Activated CD8-positive, alpha-beta T cell treated with anti-CD3 and anti-CD28 coated beads, Interleukin-2, amount 10 ng/mL, durations not matched to agents 7 days and 5 days (primary cell): ENCODE measurements at regions of chr6 and their contacts with region 1.

Region 1: DNA sequence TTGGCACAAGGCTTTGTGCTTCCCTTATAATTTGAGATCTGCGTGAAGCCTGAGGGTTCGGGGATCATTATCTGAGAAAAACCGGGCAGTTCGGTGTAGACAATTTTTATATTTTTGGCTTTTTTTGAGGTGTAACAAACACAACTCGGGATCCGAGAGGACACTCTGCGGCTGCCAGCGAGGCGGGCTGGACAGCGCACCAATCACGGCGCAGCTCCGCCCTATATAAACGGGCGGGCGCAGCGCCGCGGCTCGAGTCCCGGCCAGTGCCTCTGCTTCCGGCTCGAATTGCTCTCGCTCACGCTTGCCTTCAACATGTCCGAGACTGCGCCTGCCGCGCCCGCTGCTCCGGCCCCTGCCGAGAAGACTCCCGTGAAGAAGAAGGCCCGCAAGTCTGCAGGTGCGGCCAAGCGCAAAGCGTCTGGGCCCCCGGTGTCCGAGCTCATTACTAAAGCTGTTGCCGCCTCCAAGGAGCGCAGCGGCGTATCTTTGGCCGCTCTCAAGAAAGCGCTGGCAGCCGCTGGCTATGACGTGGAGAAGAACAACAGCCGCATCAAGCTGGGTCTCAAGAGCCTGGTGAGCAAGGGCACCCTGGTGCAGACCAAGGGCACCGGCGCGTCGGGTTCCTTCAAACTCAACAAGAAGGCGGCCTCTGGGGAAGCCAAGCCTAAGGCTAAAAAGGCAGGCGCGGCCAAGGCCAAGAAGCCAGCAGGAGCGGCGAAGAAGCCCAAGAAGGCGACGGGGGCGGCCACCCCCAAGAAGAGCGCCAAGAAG is 69.0 kb downstream of the HFE start:
- DNase-seq: peak; percentile 91
- ATAC-seq: peak; percentile 55
- H3K4me3 Mint-ChIP-seq: peak overlapping the region; percentile 94
- H3K27ac Mint-ChIP-seq: peak overlapping the region; percentile 99
- H3K4me1 Mint-ChIP-seq: peaks cover 37% of the 10 kb centered on the region
- H3K27me3 Mint-ChIP-seq: peaks cover 8% of the 10 kb centered on the region

Region 2: DNA sequence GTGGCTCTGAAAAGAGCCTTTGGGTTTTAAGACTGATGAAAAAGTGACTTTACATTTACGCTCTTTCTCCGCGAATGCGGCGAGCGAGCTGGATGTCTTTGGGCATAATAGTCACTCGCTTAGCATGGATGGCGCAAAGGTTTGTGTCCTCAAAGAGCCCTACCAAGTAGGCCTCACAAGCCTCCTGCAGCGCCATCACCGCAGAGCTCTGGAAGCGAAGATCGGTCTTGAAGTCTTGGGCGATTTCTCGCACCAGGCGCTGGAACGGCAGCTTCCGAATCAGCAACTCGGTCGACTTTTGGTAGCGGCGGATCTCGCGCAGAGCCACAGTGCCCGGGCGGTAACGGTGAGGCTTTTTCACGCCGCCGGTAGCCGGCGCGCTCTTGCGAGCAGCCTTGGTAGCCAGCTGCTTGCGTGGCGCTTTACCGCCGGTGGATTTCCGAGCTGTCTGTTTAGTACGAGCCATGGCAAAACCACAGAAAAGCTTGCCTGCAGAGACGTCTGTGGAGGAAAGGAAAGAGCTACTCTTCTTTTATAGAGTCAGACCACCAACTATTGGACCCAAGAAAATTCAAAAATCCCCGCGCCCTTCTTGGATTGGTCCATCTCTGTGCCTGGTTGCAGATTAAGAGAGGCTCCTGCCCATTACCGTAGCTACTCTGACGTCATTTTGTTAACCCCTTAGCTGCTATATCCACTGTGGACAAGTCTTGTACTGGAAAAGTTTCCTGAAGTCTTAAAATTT is 124.5 kb before region 1 on chr6:
- CTCF ChIA-PET with region 1: interaction called, 6 read pairs
- POLR2A ChIA-PET with region 1: interaction called, 312 read pairs
- DNase-seq: peak; percentile 97
- ATAC-seq: peak; percentile 66
- H3K4me3 Mint-ChIP-seq: peak overlapping the region; percentile 93
- H3K27ac Mint-ChIP-seq: peak overlapping the region; percentile 99
- H3K4me1 Mint-ChIP-seq: peaks cover 68% of the 10 kb centered on the region
- H3K27me3 Mint-ChIP-seq: peaks cover 3% of the 10 kb centered on the region

Region 3: GRCh38 chr6:26103770-26104456 is 52.4 kb before region 1 on chr6:
- CTCF ChIA-PET with region 1: interaction called, 3 read pairs
- POLR2A ChIA-PET with region 1: interaction called, 213 read pairs
- DNase-seq: peak; percentile 93
- ATAC-seq: peak; percentile 89
- H3K4me3 Mint-ChIP-seq: peak overlapping the region; percentile 85
- H3K27ac Mint-ChIP-seq: peak overlapping the region; percentile 98
- H3K4me1 Mint-ChIP-seq: peaks cover 26% of the 10 kb centered on the region
- H3K27me3 Mint-ChIP-seq: peaks cover 2% of the 10 kb centered on the region

Region 4: GRCh38 chr6:26183581-26184366 is 27.5 kb after region 1 on chr6:
- CTCF ChIA-PET with region 1: interaction called, 3 read pairs
- POLR2A ChIA-PET with region 1: interaction called, 1,978 read pairs
- DNase-seq: peak; percentile 80
- ATAC-seq: peak; percentile 80
- H3K4me3 Mint-ChIP-seq: peak overlapping the region; percentile 83
- H3K27ac Mint-ChIP-seq: peak overlapping the region; percentile 97
- H3K4me1 Mint-ChIP-seq: peaks cover 79% of the 10 kb centered on the region
- H3K27me3 Mint-ChIP-seq: no peaks in the 10 kb centered on the region

Region 5: DNA sequence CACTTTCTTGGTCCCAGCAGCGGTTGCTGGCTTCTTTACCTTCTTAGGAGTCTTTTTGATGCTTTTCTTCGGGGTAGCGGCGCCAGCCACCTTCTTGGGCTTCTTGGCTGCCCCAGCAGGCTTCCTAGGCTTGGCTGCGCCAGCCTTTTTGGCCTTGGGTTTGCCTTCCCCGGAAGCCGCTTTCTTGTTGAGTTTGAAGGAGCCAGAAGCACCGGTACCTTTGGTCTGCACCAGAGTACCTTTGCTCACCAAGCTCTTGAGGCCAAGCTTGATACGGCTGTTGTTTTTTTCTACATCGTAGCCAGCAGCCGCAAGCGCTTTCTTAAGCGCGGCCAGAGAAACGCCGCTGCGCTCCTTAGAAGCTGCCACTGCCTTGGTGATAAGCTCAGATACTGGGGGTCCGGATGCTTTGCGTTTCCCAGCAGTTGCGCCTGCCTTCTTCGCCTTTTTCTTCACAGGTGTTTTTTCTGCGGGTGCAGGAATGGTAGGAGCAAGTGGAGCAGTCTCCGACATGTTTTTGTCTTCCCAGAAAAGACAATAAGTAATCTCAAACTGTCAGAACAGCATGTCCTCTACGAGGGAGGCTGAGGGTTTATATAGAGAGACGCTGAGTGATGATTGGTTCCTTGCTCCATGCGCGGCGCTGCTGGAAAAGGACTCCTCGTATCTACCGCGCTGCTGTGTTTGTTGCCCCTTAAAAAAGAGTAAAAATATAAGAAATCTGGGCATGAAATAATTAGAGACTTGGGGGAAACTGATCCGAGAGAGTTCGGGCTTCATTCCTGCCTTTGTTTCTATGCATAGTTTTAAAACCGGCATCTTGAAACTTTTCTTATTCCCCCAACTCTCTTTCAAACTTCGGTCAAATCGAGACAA is 78.4 kb after region 1 on chr6:
- CTCF ChIA-PET with region 1: no interaction called
- POLR2A ChIA-PET with region 1: interaction called, 294 read pairs
- DNase-seq: peak; percentile 89
- ATAC-seq: peak; percentile 64
- H3K4me3 Mint-ChIP-seq: peak overlapping the region; percentile 78
- H3K27ac Mint-ChIP-seq: peak overlapping the region; percentile 99
- H3K4me1 Mint-ChIP-seq: peaks cover 41% of the 10 kb centered on the region
- H3K27me3 Mint-ChIP-seq: no peaks in the 10 kb centered on the region

Region 6: DNA sequence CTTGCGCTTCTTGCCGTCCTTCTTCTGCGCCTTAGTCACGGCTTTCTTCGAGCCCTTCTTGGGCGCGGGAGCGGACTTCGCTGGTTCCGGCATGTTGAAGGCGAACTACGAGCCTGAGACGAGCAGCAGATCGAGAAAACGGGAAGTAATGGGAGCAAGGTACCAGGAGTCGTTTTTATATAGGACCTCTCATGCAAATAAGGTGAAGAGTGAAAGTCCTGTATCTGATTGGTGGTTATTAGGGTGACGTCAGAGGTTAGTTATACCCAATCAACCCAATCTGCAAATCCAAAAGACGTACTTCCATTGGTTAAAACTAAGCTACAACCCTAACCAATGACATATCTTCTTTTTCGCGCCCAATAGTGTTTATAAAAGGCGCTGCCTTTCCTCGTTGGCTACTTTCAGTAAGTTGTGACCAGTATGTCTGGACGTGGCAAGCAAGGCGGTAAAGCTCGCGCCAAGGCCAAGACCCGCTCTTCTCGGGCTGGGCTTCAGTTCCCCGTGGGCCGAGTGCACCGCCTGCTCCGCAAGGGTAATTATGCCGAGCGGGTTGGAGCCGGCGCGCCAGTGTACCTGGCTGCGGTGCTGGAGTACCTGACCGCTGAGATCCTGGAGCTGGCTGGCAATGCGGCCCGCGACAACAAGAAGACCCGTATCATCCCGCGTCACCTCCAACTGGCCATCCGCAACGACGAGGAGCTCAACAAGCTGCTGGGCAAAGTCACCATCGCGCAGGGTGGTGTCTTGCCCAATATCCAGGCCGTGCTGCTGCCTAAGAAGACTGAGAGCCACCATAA is 990.6 kb after region 1 on chr6:
- CTCF ChIA-PET with region 1: no interaction called
- POLR2A ChIA-PET with region 1: interaction called, 59 read pairs
- DNase-seq: peak; percentile 91
- ATAC-seq: peak; percentile 64
- H3K4me3 Mint-ChIP-seq: no peak overlapping the region
- H3K27ac Mint-ChIP-seq: no peak overlapping the region
- H3K4me1 Mint-ChIP-seq: peaks cover 35% of the 10 kb centered on the region
- H3K27me3 Mint-ChIP-seq: no peaks in the 10 kb centered on the region